Heart right ventricle (tissue), 16 donors: ENCODE measurements at regions of chr1 and their contacts with region 1.

Region 1: GRCh38 chr1:203127666-203128430 is at the start of gene ADORA1:
- DNase-seq: peak; percentile 62 to 65
- ATAC-seq: peak; percentile 83 to 88 (median 84)
- H3K4me3 ChIP-seq: peak within 1 kb of the TSS in 9 of 10 donors; percentile 29 to 58 (median 49)
- H3K27ac ChIP-seq: peak within 1 kb of the TSS; percentile 58 to 91 (median 81)
- H3K4me1 ChIP-seq: peaks cover 23 to 70% (median 49%) of the 10 kb centered on the region in 9 donors
- H3K27me3 ChIP-seq: peaks cover 0 to 71% (median 21%) of the 10 kb centered on the region in 7 donors
- CTCF ChIP-seq: peak in 2 of 9 donors; percentile 15 to 26
- total RNA-seq, gene ADORA1: 5.1 to 12.2 (median 9.3) TPM

Region 2: GRCh38 chr1:202905331-202905730 is 222.5 kb before region 1 on chr1:
- intact Hi-C with region 1: no loop called
- DNase-seq: no peak
- ATAC-seq: no peak
- H3K4me3 ChIP-seq: no peak overlapping the region
- H3K27ac ChIP-seq: no peak overlapping the region
- H3K4me1 ChIP-seq: no peaks in the 10 kb centered on the region
- H3K27me3 ChIP-seq: no peaks in the 10 kb centered on the region
- CTCF ChIP-seq: no peak

Region 3: GRCh38 chr1:203099805-203100516 is 27.9 kb before region 1 on chr1:
- intact Hi-C with region 1: no loop called
- DNase-seq: no peak
- ATAC-seq: no peak
- H3K4me3 ChIP-seq: no peak overlapping the region
- H3K27ac ChIP-seq: no peak overlapping the region
- H3K4me1 ChIP-seq: peaks cover 0 to 4% (median 0%) of the 10 kb centered on the region in 9 donors
- H3K27me3 ChIP-seq: no peaks in the 10 kb centered on the region
- CTCF ChIP-seq: no peak

Region 4: DNA sequence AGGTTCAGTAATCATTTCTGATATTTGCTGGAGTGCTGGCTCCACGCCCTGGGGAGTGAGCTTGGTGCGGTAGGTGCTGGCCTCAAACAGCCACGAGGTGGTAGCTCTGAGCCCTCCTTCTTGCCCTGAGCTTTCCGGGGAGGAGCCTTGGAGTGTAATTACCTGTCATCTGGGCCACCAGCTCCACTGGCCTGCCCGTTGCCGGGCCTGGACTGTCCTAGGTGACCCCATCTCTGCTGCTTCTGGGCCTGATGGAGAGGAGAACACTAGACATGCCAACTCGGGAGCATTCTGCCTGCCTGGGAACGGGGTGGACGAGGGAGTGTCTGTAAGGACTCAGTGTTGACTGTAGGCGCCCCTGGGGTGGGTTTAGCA is 38.7 kb after region 1 on chr1:
- intact Hi-C with region 1: loop called in 2 of 10 experiments (anchors 5 kb)
- DNase-seq: no peak
- ATAC-seq: peak in 1 of 8 donors; percentile 7
- H3K4me3 ChIP-seq: no peak overlapping the region
- H3K27ac ChIP-seq: no peak overlapping the region
- H3K4me1 ChIP-seq: no peaks in the 10 kb centered on the region
- H3K27me3 ChIP-seq: no peaks in the 10 kb centered on the region
- CTCF ChIP-seq: no peak

Region 5: GRCh38 chr1:203172128-203173010 is 44.5 kb after region 1 on chr1:
- intact Hi-C with region 1: loop called in 2 of 10 experiments (anchors 5 kb)
- DNase-seq: peak; percentile 56
- ATAC-seq: peak; percentile 57 to 82 (median 72)
- H3K4me3 ChIP-seq: no peak overlapping the region
- H3K27ac ChIP-seq: no peak overlapping the region
- H3K4me1 ChIP-seq: peaks cover 0 to 16% (median 0%) of the 10 kb centered on the region in 9 donors
- H3K27me3 ChIP-seq: peaks cover 0 to 4% (median 0%) of the 10 kb centered on the region in 7 donors
- CTCF ChIP-seq: peak; percentile 62 to 87 (median 80)

Region 6: DNA sequence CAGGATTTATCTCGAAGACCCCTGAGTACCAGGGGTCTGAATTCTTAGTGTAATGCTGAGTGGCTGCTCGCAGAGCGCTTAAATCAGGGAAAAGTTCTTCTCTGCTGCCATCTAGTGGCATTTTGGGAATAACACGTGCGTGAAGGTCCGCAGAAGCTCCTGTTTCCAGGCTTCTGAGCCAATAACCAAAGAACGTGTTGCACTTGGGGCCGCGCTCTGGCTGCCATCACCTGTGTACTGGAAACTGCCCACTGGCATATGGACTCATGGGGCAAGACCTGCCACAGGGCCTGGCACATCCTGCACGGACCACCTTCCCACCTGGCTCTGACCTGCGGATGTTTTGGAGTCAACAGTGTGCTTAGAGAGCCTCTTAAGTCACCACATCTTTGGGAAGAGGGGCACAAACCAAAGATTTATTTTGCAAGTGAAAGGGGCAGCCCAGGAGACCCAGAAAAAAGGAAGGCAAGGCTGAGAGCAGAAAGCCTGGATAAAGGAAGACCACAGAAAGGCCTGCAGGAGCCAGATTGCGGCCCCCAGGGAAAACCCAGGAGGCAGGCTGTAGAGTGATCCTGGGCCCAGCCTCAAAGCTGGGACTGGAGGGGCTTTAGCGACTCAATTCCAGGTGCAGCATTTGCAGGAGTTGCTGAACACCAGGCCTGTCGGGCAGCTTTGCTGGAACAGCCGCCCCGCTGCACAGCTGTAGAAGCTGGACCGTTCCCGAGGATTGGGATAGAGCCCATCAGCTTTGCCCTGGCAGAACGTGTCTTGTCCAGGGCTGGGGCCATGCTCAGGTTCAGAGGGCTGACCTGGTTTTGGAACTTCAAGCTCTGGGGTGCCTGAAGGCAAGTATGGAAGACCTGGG is 88.7 kb after region 1 on chr1:
- intact Hi-C with region 1: loop called in 1 of 10 experiments (anchors 5 kb)
- DNase-seq: peak in 1 of 2 donors; percentile 58
- ATAC-seq: peak; percentile 55 to 88 (median 76)
- H3K4me3 ChIP-seq: no peak overlapping the region
- H3K27ac ChIP-seq: no peak overlapping the region
- H3K4me1 ChIP-seq: peaks cover 0 to 15% (median 0%) of the 10 kb centered on the region in 9 donors
- H3K27me3 ChIP-seq: peaks cover 0 to 16% (median 11%) of the 10 kb centered on the region in 7 donors
- CTCF ChIP-seq: peak; percentile 75 to 91 (median 82)